Activated T-helper 2 cell treated with anti-CD3 and anti-CD28 coated beads, Interferon-gamma antibody, Interleukin-2, Interleukin-4, amounts not matched to agents 10 μg/mL and 5 μg/mL and 100 μg/mL, durations not matched to agents 14 hours and 24 hours and 36 hours (primary cell): ENCODE measurements at regions of chr5 and their contacts with region 1.

Region 1: GRCh38 chr5:169805527-169805934 is 168.5 kb downstream of the DOCK2 start:
- DNase-seq: peak; percentile 41
- H3K4me3 Mint-ChIP-seq: peak overlapping the region; percentile 37
- H3K27ac Mint-ChIP-seq: peak overlapping the region; percentile 88
- H3K4me1 Mint-ChIP-seq: peaks cover 48% of the 10 kb centered on the region
- H3K27me3 Mint-ChIP-seq: no peaks in the 10 kb centered on the region

Region 2: GRCh38 chr5:169591636-169592035 is 213.9 kb before region 1 on chr5:
- intact Hi-C with region 1: no loop called
- DNase-seq: no peak
- H3K4me3 Mint-ChIP-seq: no peak overlapping the region
- H3K27ac Mint-ChIP-seq: no peak overlapping the region
- H3K4me1 Mint-ChIP-seq: peaks cover 12% of the 10 kb centered on the region
- H3K27me3 Mint-ChIP-seq: no peaks in the 10 kb centered on the region

Region 3: DNA sequence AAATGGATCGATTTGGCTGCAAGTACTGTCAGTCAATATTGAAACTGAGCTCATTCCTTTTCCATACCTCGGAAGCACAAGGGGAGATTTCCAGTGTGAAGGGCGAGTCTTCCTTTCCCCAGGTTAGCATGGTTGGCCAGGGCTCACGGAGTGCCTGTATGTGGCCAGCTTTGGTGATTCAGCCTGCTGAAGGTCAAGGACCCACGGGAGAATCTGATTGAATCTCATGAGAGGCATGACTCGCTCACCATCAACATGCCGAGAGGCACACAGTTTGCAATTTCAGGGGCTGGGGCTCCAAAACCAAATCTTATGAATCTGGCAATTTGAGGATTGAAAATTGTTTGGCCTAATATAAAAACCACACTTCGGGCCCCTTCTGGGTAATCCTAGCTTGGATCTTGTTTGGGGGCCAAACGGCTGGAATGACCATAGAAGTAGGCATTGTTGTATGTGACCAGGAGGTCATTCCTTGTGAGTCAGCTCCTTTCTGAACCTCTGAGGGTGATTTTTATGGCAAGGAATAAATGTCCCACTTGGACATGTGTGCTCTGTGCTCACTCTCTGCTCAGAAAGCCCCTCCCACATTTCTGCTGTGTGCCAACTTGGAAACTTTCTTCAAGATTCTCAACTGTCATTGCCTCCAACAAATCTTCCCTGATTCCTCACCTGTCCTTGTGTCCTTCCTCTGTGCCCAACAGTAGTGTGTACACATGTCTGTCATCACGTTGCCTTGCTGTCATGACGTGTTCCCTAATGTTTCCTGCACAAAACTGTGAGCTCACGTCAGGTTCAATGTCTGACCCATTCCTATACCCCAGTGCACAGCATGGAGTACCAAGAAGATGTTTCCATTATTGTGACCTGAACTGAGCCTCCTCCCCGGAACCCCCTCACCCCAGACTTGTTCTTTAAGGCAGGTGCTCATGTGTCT is 98.5 kb before region 1 on chr5:
- intact Hi-C with region 1: loop called (anchors 1 kb)
- DNase-seq: no peak
- H3K4me3 Mint-ChIP-seq: no peak overlapping the region
- H3K27ac Mint-ChIP-seq: peak overlapping the region; percentile 92
- H3K4me1 Mint-ChIP-seq: peaks cover 40% of the 10 kb centered on the region
- H3K27me3 Mint-ChIP-seq: no peaks in the 10 kb centered on the region

Region 4: DNA sequence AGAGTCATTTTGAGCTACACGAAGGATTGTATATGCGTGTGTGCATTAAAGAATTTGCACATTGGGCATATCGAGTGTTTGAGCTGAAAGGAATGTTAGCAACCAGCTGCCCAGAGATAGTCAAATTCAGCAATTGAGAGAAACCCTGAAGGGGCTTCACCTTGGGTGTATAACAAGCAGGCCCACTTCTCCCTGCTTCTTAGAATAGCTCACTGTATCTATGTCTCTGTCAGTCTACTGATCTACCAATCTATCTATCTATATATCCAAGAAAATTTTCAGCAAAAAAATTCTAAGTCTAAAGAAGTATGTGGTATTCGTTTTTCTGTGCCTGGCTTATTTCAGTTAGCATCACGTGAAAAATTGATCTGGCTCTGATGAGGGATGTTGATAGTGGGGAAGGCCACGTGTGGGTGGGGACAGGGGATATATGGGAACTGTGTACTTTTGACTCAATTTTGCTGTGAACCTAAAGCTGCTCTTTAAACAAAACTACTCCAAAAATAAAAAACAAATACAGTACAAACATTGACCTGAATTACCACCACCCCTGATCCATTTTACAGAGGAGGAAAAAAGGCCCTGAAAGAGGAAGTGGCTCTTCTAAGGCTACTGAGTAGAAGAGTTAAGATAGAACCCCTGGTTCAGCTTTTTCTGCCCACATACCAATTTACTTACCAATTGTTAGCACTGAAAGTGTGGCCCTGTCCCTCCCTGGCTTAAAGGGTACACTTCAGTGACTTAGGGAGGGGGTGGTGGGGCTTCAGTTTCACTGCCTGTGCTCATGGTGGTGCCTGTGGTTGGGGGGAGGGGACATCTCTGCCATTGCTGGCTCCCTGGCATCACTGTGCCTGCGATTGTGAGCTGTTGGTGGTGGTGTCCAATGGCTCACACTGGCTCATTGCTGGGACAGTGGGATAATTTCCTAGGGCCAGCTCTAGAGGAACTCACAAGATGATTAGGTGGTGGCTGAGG is 26.6 kb before region 1 on chr5:
- intact Hi-C with region 1: loop called (anchors 2 kb)
- DNase-seq: no peak
- H3K4me3 Mint-ChIP-seq: no peak overlapping the region
- H3K27ac Mint-ChIP-seq: peak overlapping the region; percentile 76
- H3K4me1 Mint-ChIP-seq: peaks cover 43% of the 10 kb centered on the region
- H3K27me3 Mint-ChIP-seq: no peaks in the 10 kb centered on the region

Region 5: DNA sequence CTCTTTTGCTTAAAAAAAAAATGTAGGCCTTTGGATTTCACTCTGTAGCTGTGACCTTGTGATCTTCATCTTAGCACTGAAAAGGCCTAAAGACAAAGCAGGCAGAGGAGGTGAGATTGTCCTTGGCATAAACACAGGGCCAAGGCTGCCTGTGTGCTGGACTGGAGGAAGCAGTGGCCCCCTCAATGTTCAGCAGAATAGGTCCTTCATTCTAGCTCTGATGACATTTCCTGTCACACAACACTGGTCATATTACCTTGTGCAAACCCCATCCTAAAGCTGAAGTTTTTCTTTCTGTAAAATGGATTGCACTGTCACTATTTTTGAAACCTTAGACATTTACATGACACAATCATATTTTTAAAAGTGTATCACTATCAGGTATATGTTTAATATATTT is 27.3 kb after region 1 on chr5:
- intact Hi-C with region 1: loop called (anchors 1 kb)
- DNase-seq: no peak
- H3K4me3 Mint-ChIP-seq: no peak overlapping the region
- H3K27ac Mint-ChIP-seq: peak overlapping the region; percentile 71
- H3K4me1 Mint-ChIP-seq: peaks cover 53% of the 10 kb centered on the region
- H3K27me3 Mint-ChIP-seq: no peaks in the 10 kb centered on the region

Region 6: DNA sequence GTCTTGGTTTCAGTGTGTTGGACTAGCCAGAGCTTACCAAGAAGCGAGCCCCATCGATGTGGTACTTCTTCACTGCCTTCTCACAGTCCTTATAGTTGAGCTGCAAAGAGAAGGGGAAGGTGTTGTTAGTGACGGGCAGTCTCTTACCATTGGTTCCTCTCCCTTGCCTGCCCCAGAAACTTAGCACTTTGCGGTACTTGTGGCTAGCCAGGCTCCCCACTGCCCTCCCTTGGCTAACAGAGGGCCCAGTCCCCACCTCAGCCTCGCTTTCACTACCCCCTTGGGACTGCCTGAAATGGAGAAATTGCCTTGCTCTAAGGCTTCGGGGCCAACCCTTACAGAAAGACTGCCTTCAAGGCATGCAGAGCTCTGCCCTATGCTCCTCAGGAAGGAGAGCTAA is 487.7 kb after region 1 on chr5:
- intact Hi-C with region 1: loop called (anchors 10 kb)
- DNase-seq: peak; percentile 60
- H3K4me3 Mint-ChIP-seq: peak overlapping the region; percentile 98
- H3K27ac Mint-ChIP-seq: peak overlapping the region; percentile 92
- H3K4me1 Mint-ChIP-seq: peaks cover 76% of the 10 kb centered on the region
- H3K27me3 Mint-ChIP-seq: no peaks in the 10 kb centered on the region

Region 7: DNA sequence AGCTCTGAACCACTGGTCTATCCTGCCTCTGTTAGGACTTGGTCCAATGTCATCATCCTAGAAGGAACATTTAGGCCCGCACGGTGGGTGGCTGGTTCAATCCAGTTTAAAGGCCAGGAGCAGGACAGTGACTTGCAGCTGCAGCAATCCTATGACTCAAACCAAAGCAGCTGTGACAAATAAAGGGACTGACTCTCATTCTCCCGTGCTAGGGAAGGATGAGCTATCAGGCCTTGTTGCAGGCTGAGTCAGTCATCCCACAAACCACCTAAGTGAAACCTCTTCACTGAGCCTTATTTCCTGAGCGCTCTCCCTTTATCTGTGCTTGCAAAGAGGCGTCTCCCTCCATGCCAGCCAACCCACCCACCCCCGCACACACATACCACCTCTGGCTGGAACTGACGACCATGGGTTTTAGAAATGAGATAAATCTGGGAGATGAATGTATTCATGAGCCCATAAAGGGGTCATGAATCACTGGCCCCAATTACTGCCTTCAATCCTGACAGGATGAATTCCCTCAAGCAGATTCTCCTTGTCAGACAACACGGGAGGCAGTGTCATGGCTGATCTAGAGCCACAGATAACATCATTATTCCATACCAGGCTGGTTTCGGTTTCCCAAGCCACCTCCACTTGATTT is 791.7 kb after region 1 on chr5:
- intact Hi-C with region 1: loop called (anchors 10 kb)
- DNase-seq: no peak
- H3K4me3 Mint-ChIP-seq: no peak overlapping the region
- H3K27ac Mint-ChIP-seq: no peak overlapping the region
- H3K4me1 Mint-ChIP-seq: peaks cover 17% of the 10 kb centered on the region
- H3K27me3 Mint-ChIP-seq: peaks cover 25% of the 10 kb centered on the region